Motor neuron (in vitro differentiated cells): ENCODE measurements at regions of chr12 and their contacts with region 1.

Region 1: GRCh38 chr12:569803-570434 is 93.3 kb downstream of the NINJ2 start:
- ATAC-seq: peak; percentile 62 to 91 (median 84)
- H3K4me3 ChIP-seq: peak overlapping the region; percentile 36 to 45 (median 42)
- H3K27ac ChIP-seq: no peak overlapping the region
- H3K4me1 ChIP-seq: peaks cover 8 to 9% of the 10 kb centered on the region in 2 donors

Region 2: DNA sequence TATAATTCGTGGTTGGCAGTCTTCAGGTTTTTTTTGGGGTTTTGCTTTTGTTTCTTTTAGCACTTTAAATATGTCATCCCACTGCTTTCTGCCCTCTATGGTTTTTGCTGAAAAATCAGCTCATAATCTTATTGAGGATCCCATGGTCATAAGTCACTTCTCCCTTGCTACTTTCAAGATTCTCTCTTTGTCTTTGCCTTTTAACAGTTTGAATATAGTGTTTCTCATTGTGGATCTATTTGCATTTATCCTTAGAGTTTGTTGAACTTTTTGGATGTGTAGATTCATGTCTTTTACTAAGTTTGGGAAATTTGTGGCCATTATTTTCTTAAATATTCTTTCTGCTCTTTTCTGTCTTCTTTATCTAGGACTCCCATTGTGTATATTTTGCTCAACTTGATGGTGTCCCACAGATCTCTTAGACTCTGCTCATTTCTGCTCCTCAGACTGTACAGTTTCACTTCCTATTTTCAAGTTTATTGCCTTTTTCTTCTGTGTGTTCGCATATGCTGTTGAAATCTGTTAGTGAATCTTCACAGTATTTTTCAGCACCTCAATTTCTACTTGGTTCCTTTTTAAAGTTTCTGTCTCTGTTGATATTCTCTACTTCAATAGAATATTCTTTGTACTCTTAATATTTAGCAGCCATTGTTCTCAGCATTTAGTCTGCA is 253.2 kb after region 1 on chr12:
- in situ Hi-C with region 1: loop called in 1 of 9 experiments (anchors 25 kb)
- ATAC-seq: no peak
- H3K4me3 ChIP-seq: no peak overlapping the region
- H3K27ac ChIP-seq: no peak overlapping the region
- H3K4me1 ChIP-seq: no peaks in the 10 kb centered on the region

Region 3: GRCh38 chr12:949453-950191 is 379.7 kb after region 1 on chr12 and contains the start of gene RAD52:
- in situ Hi-C with region 1: loop called in 5 of 9 experiments (anchors 10 to 25 kb)
- ATAC-seq: peak; percentile 85 to 97 (median 94)
- H3K4me3 ChIP-seq: peak within 1 kb of the TSS; percentile 57 to 73 (median 67)
- H3K27ac ChIP-seq: peak within 1 kb of the TSS; percentile 78 to 85
- H3K4me1 ChIP-seq: peaks cover 0 to 4% of the 10 kb centered on the region in 2 donors
- total RNA-seq, gene RAD52: 9.0 to 31.4 (median 15.1) TPM

Region 4: GRCh38 chr12:1093166-1093751 is 523.3 kb after region 1 on chr12:
- in situ Hi-C with region 1: loop called in 1 of 9 experiments (anchors 25 kb)
- ATAC-seq: peak in 6 of 8 experiments; percentile 39 to 85 (median 64)
- H3K4me3 ChIP-seq: no peak overlapping the region
- H3K27ac ChIP-seq: no peak overlapping the region
- H3K4me1 ChIP-seq: peaks cover 0 to 3% of the 10 kb centered on the region in 2 donors

Region 5: DNA sequence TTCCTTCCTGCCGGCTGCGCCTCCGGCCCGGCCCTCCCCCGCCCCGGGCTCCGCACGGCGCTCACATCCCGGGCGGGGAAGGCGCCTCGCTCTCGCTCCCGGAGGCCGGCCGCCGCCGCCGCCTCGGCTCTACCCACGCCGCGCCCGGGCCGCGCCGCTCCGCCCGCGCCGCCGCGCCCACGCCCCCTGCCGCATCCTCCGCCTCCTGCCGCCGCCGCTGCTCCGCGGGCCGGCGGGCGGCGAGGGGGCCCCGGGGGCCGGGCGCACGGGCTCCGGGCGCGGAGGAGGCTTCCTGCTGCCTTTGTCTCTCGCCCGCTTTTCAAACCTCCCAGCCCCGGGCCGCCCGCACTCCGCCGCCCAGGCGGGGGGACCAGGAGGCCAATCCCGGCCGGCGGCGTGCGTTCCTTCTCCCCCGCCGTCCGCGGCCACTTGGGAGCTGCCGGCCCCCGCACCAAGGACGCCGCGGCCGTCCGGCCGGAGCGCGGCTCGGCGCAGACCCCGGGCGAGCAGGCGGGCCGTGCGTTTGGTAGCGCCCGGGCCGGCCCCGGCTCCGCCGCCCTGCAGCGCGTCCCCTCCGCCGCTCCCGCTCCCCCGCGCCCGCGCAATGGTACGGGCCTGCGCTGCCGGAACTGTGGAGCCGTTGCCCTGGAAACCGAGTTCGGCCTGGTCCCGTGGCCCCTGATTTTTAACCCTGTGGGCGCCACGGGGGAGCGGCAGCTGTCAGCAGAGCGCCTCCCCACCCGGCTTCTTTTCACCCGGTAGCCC is 1024.5 kb after region 1 on chr12 and contains the start of gene FBXL14:
- in situ Hi-C with region 1: loop called in 4 of 9 experiments (anchors 10 to 25 kb)
- ATAC-seq: peak; percentile 69 to 79 (median 74)
- H3K4me3 ChIP-seq: peak within 1 kb of the TSS; percentile 55 to 98 (median 68)
- H3K27ac ChIP-seq: peak within 1 kb of the TSS; percentile 96 to 97
- H3K4me1 ChIP-seq: peaks cover 11 to 19% of the 10 kb centered on the region in 2 donors
- total RNA-seq, gene FBXL14: 5.6 to 25.6 (median 10.0) TPM